Activated CD8-positive, alpha-beta T cell treated with anti-CD3 and anti-CD28 coated beads for 36 hours (primary cell): ENCODE measurements at regions of chr20 and their contacts with region 1.

Region 1: DNA sequence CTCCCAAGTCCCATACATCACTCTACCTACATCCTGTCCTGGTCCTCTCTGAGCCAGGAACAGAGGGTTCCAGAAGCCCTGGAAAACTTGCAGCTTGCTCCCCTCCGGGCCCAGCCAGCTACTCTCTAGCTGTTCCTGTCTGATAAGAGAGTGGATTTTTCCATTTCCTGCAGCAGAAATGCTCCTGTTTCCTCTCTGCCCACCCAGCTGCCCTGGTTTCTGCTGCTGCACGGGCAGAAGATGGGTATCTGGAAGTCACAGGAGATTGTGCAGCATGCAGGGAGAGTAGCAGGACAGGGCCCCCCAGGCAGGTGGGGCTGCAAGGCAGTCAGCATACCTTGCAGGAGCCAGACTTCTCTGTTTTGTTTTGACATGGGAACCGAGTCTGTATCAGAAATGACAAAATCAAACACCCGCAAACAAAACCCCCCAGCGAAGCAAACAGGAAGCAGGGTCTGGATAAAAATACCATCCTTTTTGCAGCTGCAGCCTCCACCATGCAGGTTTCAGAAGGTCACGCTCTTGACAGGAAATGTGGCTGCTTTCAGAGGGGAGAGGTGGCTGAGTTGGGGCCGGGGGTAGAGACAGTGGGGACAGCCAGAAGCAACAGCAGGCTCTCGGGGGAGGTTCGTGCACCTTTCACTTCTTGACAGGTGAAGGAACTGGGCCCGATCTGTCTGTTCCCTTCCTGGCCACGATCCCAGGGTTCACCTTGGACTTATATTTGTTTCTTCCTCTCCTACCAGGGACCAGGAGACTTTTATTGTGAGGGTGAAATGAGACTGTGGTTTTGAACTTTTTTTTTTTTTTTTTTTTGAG is 50.8 kb upstream of the FAM83D start:
- DNase-seq: peak; percentile 84
- ATAC-seq: peak; percentile 29
- H3K4me3 Mint-ChIP-seq: peak overlapping the region; percentile 67
- H3K27ac Mint-ChIP-seq: peak overlapping the region; percentile 96
- H3K4me1 Mint-ChIP-seq: peaks cover 89% of the 10 kb centered on the region
- H3K27me3 Mint-ChIP-seq: no peaks in the 10 kb centered on the region
- CTCF ChIP-seq: no peak

Region 2: GRCh38 chr20:38833857-38834164 is 41.6 kb before region 1 on chr20:
- CTCF ChIA-PET with region 1: interaction called, 7 read pairs
- POLR2A ChIA-PET with region 1: interaction called, 5 read pairs
- intact Hi-C with region 1: loop called (anchors 5 kb)
- DNase-seq: peak; percentile 70
- ATAC-seq: peak; percentile 73
- H3K4me3 Mint-ChIP-seq: no peak overlapping the region
- H3K27ac Mint-ChIP-seq: peak overlapping the region; percentile 86
- H3K4me1 Mint-ChIP-seq: peaks cover 65% of the 10 kb centered on the region
- H3K27me3 Mint-ChIP-seq: no peaks in the 10 kb centered on the region
- CTCF ChIP-seq: no peak

Region 3: GRCh38 chr20:38842558-38842981 is 32.8 kb before region 1 on chr20:
- CTCF ChIA-PET with region 1: interaction called, 6 read pairs
- POLR2A ChIA-PET with region 1: interaction called, 12 read pairs
- intact Hi-C with region 1: no loop called
- DNase-seq: peak; percentile 88
- ATAC-seq: peak; percentile 77
- H3K4me3 Mint-ChIP-seq: peak overlapping the region; percentile 61
- H3K27ac Mint-ChIP-seq: peak overlapping the region; percentile 94
- H3K4me1 Mint-ChIP-seq: peaks cover 84% of the 10 kb centered on the region
- H3K27me3 Mint-ChIP-seq: no peaks in the 10 kb centered on the region
- CTCF ChIP-seq: no peak

Region 4: DNA sequence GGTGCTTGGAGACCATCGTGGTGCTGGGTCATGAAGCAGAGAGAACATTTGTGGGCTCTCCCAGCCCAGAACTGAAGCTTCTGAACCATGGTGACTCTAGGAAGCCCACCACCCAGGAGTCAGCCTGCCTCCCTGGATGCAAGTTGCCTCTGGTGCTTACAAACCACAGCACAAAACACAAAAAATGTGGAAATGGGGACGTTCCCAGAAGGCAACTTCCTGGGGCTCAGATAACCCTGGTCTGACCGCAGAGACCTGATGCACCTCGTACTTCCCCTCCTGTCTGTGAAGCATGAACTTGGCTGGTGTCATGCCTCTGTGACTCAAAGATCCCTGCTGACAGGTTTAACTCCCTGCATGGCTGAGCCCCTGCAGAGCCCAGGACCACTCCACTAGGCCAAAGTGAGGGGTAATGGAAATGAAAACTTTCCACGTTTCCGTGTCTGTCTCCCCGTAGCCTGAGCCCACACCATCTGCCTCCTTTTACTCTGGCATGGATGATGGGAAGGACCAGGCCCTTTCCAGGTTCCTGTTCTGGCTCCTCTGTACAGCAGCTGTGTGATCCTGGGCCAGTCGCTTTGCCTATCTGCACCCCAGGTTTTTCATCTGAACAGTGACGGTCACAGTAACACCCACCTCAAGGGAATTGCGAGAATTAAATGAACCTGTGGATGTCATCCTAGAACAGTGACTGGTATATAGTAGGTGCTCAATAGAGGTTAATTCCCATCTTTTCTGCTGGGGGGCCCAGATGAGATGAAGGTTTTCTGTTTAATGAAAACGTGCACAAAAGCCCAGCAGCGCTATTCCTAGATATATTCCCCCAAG is 12.1 kb before region 1 on chr20:
- CTCF ChIA-PET with region 1: interaction called, 9 read pairs
- POLR2A ChIA-PET with region 1: interaction called, 10 read pairs
- intact Hi-C with region 1: no loop called
- DNase-seq: peak; percentile 81
- ATAC-seq: peak; percentile 90
- H3K4me3 Mint-ChIP-seq: peak overlapping the region; percentile 9
- H3K27ac Mint-ChIP-seq: peak overlapping the region; percentile 79
- H3K4me1 Mint-ChIP-seq: peaks cover 63% of the 10 kb centered on the region
- H3K27me3 Mint-ChIP-seq: no peaks in the 10 kb centered on the region
- CTCF ChIP-seq: no peak